ENCODE measurements at regions of chr1 and their contacts with region 1.

Region 1: GRCh38 chr1:160607011-160607671 is 27.8 kb upstream of the CD84 start:
- DNase-seq: peak; percentile 46
- CTCF ChIP-seq: peak; percentile 63

Region 2: GRCh38 chr1:160428655-160429054 is 178.5 kb before region 1 on chr1:
- in situ Hi-C with region 1: loop called (anchors 5 kb)
- DNase-seq: peak; percentile 52
- CTCF ChIP-seq: peak; percentile 50

Region 3: DNA sequence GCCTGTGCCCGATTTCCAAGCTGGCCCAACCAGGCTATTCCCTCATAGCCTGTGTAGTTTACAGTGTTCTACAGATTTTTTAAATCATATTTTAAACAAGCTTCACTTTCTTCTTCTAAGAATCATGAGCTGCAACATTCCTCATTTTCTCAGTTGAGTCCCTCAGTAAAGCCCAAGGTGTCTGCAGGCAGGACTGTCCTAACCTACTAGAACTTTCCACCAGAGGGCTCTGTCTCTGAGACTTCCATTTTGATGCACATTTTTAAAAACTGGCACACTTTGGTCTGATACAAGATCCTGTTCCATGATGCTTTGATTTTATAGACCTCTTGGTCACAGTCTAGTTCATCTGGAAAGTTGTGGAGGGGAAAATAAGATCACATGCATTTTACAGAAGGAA is 62.5 kb before region 1 on chr1:
- in situ Hi-C with region 1: loop called (anchors 5 kb)
- DNase-seq: no peak
- CTCF ChIP-seq: peak; percentile 33

Measured in GM13976 (cell line).